Activated CD8-positive, alpha-beta T cell treated with anti-CD3 and anti-CD28 coated beads, Interleukin-2, amount 10 ng/mL, durations not matched to agents 7 days and 5 days (primary cell): ENCODE measurements at regions of chr16 and their contacts with region 1.

Region 1: DNA sequence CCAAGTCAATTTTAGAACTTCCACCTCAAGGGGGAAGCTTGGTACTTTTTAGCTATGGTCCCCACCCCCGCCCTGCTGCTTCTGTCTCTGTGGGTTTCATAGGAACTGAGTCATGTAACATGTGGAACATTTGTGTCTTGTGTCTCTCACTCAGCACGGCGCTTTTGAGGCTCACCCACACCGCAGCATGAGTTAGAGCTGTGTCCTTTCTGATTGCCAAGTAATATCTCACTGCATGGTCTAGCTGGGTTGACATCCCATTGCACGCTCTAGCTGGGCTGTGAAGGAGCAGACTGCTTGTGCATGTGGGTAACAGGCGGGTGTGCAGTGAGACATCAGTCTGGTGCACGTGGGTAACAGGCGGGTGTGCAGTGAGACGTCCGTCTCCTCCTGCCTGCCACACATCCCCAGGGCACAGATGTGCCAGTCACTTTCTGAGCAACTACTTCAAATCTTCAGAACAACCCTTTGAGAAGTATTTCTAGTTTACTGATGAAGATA is 26.4 kb upstream of the SLC7A5 start:
- DNase-seq: peak; percentile 92
- ATAC-seq: peak; percentile 84
- H3K4me3 Mint-ChIP-seq: peak overlapping the region; percentile 56
- H3K27ac Mint-ChIP-seq: peak overlapping the region; percentile 96
- H3K4me1 Mint-ChIP-seq: peaks cover 54% of the 10 kb centered on the region
- H3K27me3 Mint-ChIP-seq: no peaks in the 10 kb centered on the region

Region 2: GRCh38 chr16:87877938-87878507 is 17.7 kb before region 1 on chr16:
- CTCF ChIA-PET with region 1: interaction called, 17 read pairs
- POLR2A ChIA-PET with region 1: interaction called, 6 read pairs
- DNase-seq: peak; percentile 62
- ATAC-seq: no peak
- H3K4me3 Mint-ChIP-seq: no peak overlapping the region
- H3K27ac Mint-ChIP-seq: peak overlapping the region; percentile 34
- H3K4me1 Mint-ChIP-seq: peaks cover 34% of the 10 kb centered on the region
- H3K27me3 Mint-ChIP-seq: peaks cover 14% of the 10 kb centered on the region

Region 3: GRCh38 chr16:87914812-87915211 is 19.1 kb after region 1 on chr16:
- CTCF ChIA-PET with region 1: interaction called, 15 read pairs
- POLR2A ChIA-PET with region 1: interaction called, 3 read pairs
- DNase-seq: no peak
- ATAC-seq: no peak
- H3K4me3 Mint-ChIP-seq: no peak overlapping the region
- H3K27ac Mint-ChIP-seq: no peak overlapping the region
- H3K4me1 Mint-ChIP-seq: peaks cover 6% of the 10 kb centered on the region
- H3K27me3 Mint-ChIP-seq: peaks cover 6% of the 10 kb centered on the region

Region 4: DNA sequence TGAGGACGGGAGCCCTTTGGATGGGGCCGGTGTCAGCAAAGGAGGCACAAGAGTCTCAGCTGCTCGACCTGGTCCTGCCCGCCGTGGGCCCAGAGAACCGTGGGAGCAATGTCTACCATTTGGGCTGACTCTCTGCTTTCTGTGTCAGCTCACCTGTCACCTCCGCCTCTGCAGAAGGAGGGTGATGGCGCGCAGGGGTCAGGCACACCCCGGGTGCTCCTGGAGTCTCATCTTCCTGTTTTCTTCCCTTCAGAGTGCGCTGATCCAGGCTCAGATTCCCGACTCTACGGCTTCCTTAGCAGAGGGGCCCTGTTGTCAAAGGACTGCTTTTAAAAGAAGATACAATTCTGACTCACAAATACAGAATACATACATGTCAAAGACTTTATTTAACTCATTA is 222.7 kb after region 1 on chr16:
- CTCF ChIA-PET with region 1: no interaction called
- POLR2A ChIA-PET with region 1: no interaction called
- DNase-seq: no peak
- ATAC-seq: no peak
- H3K4me3 Mint-ChIP-seq: no peak overlapping the region
- H3K27ac Mint-ChIP-seq: no peak overlapping the region
- H3K4me1 Mint-ChIP-seq: peaks cover 4% of the 10 kb centered on the region
- H3K27me3 Mint-ChIP-seq: no peaks in the 10 kb centered on the region